ENCODE measurements at regions of chr6 and their contacts with region 1.

Region 1: GRCh38 chr6:2853761-2854395 is 12.2 kb upstream of the SERPINB1 start:
- DNase-seq: peak; percentile 75
- ATAC-seq: peak; percentile 47
- H3K4me3 ChIP-seq: peak overlapping the region; percentile 51 to 60 (median 53)
- H3K27ac ChIP-seq: peak overlapping the region; percentile 65
- H3K4me1 ChIP-seq: peaks cover 91% of the 10 kb centered on the region
- H3K27me3 ChIP-seq: no peaks in the 10 kb centered on the region
- CTCF ChIP-seq: peak; percentile 53; the same call in 1 of the 2 replicates
- EP300 ChIP-seq: peak in 1 of 2 experiments; percentile 8; a peak in 1 of 4 replicates
- POLR2A ChIP-seq: 0 out of 4 replicates have a peak, but pooled peaks of 1 of the 2 experiments have one; percentile 22
- RAD21 ChIP-seq: no peak; the same call in 1 of the 2 replicates

Region 2: GRCh38 chr6:2589171-2589661 is 264.7 kb before region 1 on chr6:
- CTCF ChIA-PET with region 1: no interaction called
- POLR2A ChIA-PET with region 1: no interaction called
- in situ Hi-C with region 1: no loop called
- intact Hi-C with region 1: no loop called
- DNase-seq: peak; percentile 36
- ATAC-seq: peak; percentile 51
- H3K4me3 ChIP-seq: no peak overlapping the region
- H3K27ac ChIP-seq: no peak overlapping the region
- H3K4me1 ChIP-seq: peaks cover 14% of the 10 kb centered on the region
- H3K27me3 ChIP-seq: no peaks in the 10 kb centered on the region; a peak in 1 of 5 replicates
- CTCF ChIP-seq: no peak
- EP300 ChIP-seq: peak in 1 of 2 experiments; percentile 16; a peak in 1 of 4 replicates
- POLR2A ChIP-seq: no peak
- RAD21 ChIP-seq: no peak

Region 3: DNA sequence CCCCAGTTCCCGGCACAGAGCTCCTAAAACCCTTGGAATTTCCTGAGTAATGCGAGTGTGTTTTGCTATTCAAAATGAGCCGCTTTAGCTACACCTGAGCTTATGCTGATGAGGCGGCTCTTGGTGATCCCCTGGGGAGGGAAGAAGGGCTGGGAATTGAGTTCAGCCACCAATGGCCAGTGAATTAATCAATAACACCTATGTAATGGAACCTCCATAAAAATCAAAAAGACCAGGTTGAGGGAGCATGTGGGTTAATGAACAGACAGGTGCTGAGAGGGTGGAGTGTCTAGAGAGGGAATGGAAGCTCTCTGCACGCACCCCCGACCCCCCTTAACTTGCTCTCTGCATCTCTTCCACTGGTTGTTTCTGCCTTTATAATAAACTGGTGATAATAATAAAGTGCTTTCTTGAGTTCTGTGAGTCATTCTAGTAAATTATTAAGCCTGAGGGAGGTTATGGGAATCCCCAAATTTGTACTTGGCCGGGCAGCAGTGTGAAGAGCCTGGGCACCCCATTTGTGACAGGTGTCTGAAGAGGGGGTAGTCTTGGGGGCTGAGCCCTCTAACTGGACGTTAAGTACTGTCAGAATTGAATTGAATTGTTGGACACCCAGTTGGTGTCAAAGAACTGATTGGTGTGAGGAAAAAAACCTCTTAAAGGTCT is 12.4 kb after region 1 on chr6:
- CTCF ChIA-PET with region 1: no interaction called
- POLR2A ChIA-PET with region 1: interaction called, 12 read pairs
- in situ Hi-C with region 1: no loop called
- intact Hi-C with region 1: no loop called
- DNase-seq: no peak
- ATAC-seq: no peak
- H3K4me3 ChIP-seq: peak overlapping the region in 1 of 3 experiments; percentile 16; a peak in 1 of 6 replicates
- H3K27ac ChIP-seq: no peak overlapping the region
- H3K4me1 ChIP-seq: peaks cover 61% of the 10 kb centered on the region
- H3K27me3 ChIP-seq: no peaks in the 10 kb centered on the region
- CTCF ChIP-seq: no peak
- EP300 ChIP-seq: no peak
- POLR2A ChIP-seq: no peak
- RAD21 ChIP-seq: no peak

Region 4: GRCh38 chr6:2900821-2901644 is 47.2 kb after region 1 on chr6:
- CTCF ChIA-PET with region 1: no interaction called
- POLR2A ChIA-PET with region 1: interaction called, 11 read pairs
- in situ Hi-C with region 1: no loop called
- intact Hi-C with region 1: no loop called
- DNase-seq: no peak
- ATAC-seq: no peak
- H3K4me3 ChIP-seq: peak overlapping the region in 1 of 3 experiments; percentile 89; a peak in 1 of 6 replicates
- H3K27ac ChIP-seq: no peak overlapping the region
- H3K4me1 ChIP-seq: peaks cover 28% of the 10 kb centered on the region
- H3K27me3 ChIP-seq: peaks cover 0 to 8% of the 10 kb centered on the region in 2 experiments; a peak in 1 of 5 replicates
- CTCF ChIP-seq: no peak
- EP300 ChIP-seq: no peak
- POLR2A ChIP-seq: no peak
- RAD21 ChIP-seq: no peak

Region 5: GRCh38 chr6:2931970-2932748 is 78.3 kb after region 1 on chr6:
- CTCF ChIA-PET with region 1: interaction called, 6 read pairs
- POLR2A ChIA-PET with region 1: no interaction called
- in situ Hi-C with region 1: no loop called
- intact Hi-C with region 1: loop called (anchors 2 kb)
- DNase-seq: peak; percentile 85
- ATAC-seq: peak; percentile 99
- H3K4me3 ChIP-seq: peak overlapping the region in 1 of 3 experiments; percentile 63; a peak in 2 of 6 replicates
- H3K27ac ChIP-seq: no peak overlapping the region
- H3K4me1 ChIP-seq: peaks cover 10% of the 10 kb centered on the region
- H3K27me3 ChIP-seq: peaks cover 0 to 3% of the 10 kb centered on the region in 2 experiments; a peak in 2 of 5 replicates
- CTCF ChIP-seq: peak; percentile 99
- EP300 ChIP-seq: no peak
- POLR2A ChIP-seq: no peak
- RAD21 ChIP-seq: peak; percentile 96

Region 6: DNA sequence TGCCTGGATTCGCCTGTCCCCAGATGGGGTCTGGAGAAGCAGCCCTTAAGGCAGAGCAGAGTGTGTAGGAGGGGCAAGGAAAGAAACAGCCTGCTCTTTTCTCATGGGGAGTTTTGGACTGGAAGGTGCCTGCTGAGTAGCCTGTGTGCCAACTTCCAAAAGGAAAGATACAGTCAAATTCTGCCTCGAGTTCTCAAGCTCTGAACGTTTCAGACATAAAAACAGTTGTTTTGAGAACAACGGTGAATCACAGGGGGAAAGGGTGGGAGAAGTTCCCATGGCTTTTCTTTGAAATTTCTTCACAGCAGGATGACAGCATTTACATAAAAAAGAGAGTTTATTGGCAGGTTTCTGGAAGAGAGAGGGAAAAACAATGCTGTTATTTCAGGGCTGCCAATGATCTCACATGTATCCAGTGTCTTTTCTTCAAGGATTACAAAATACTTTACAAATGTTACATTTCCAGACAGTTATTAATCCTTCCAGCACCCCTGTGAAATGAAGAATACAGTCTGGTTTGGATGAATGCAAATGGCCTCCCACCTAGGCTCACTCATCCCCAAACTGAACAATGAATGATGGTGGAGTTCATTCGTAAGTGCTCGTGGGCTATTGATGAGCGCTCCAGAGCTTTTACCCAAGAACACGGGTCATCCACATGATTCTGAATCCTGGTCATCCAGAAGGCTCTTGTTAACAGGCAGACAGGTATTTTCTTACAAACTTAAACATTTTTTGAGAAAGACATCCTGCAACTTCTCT is 1315.3 kb after region 1 on chr6:
- CTCF ChIA-PET with region 1: no interaction called
- POLR2A ChIA-PET with region 1: no interaction called
- in situ Hi-C with region 1: no loop called
- intact Hi-C with region 1: no loop called
- DNase-seq: no peak
- ATAC-seq: no peak
- H3K4me3 ChIP-seq: no peak overlapping the region
- H3K27ac ChIP-seq: no peak overlapping the region
- H3K4me1 ChIP-seq: 0 out of 2 replicates have a peak, but pooled peaks cover 3% of the 10 kb centered on the region
- H3K27me3 ChIP-seq: peaks cover 0 to 29% of the 10 kb centered on the region in 2 experiments; a peak in 4 of 5 replicates
- CTCF ChIP-seq: no peak
- EP300 ChIP-seq: no peak
- POLR2A ChIP-seq: no peak
- RAD21 ChIP-seq: no peak